Left lung (tissue), 14 donors: ENCODE measurements at regions of chr15 and their contacts with region 1.

Region 1: DNA sequence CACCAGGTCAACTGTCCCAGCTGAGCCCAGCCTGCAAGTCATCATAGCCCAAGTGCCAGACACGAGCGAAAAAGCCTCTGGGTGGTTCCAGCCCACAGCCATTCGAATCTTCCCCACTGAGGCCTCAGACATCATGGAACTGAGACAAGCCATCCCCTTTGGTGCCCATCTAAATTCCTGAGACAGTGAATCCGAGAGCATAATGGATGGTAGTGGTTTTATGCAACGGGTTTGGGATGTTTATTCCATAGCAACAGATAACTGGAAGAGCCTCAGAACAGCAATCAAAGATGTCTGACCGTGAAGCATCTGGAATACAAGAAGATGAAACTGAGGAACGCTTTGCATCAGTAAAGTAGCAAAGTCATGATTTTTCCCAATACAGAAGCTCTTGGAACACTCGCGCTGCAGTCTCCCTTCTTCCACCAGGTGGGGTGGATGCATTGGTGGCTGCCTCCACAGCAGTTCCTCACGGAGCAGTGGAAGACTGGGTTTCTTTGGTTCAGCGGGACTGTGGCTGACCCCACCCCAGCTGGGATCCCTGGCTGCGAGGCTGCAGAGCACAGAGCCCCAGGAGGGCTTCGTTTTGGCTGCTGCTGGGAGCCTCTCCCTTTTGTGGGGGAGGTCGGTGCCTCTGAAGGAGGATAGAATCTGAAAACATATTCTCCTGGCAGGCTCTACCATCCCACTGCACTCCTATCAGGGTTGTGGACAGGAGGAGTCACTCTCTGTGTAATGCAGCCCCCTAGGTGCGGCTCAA is 26.4 kb upstream of the PDE8A start:
- DNase-seq: peak in 3 of 4 donors; percentile 54 to 75 (median 55)
- ATAC-seq: peak; percentile 97
- H3K4me3 ChIP-seq: peak overlapping the region in 1 of 2 donors; percentile 7
- H3K27ac ChIP-seq: no peak overlapping the region
- H3K4me1 ChIP-seq: peaks cover 0 to 20% of the 10 kb centered on the region in 2 donors
- H3K27me3 ChIP-seq: no peaks in the 10 kb centered on the region
- CTCF ChIP-seq: peak; percentile 69 to 75

Region 2: DNA sequence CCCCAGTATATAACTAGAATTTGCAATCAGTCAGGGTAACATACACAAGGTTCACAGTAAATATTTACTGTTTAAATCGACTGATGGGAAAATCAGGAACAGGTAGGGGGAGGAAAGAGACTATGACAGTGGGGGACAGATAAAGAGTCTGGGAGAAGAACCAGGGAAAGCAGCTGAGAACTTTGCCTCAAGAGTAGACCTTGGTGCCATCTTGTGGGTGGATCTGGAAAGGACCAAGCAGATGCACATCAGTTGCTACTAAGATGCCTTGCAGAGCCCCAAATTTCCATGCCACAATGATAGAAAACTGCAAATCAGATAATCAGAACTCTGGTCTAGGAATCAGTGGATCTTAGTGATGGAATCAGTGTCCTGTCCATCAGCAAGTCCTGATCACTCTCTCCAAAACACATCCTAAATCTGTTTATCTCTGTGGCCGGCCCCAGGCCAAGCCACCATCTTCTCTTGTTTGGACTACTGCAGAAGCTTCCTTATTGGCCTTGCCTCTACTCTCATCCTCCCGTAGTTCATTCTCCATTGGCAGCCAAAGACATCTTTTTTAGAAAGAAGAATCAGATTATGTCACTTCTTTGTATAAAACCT is 89.1 kb after region 1 on chr15:
- intact Hi-C with region 1: loop called in 1 of 2 experiments (anchors 10 kb)
- DNase-seq: peak in 2 of 4 donors; percentile 34 to 67
- ATAC-seq: peak; percentile 87
- H3K4me3 ChIP-seq: no peak overlapping the region
- H3K27ac ChIP-seq: no peak overlapping the region
- H3K4me1 ChIP-seq: peaks cover 13 to 32% of the 10 kb centered on the region in 2 donors
- H3K27me3 ChIP-seq: no peaks in the 10 kb centered on the region
- CTCF ChIP-seq: peak; percentile 50 to 64